Endothelial cell of umbilical vein (primary cell): ENCODE measurements at regions of chr13 and their contacts with region 1.

Region 1: DNA sequence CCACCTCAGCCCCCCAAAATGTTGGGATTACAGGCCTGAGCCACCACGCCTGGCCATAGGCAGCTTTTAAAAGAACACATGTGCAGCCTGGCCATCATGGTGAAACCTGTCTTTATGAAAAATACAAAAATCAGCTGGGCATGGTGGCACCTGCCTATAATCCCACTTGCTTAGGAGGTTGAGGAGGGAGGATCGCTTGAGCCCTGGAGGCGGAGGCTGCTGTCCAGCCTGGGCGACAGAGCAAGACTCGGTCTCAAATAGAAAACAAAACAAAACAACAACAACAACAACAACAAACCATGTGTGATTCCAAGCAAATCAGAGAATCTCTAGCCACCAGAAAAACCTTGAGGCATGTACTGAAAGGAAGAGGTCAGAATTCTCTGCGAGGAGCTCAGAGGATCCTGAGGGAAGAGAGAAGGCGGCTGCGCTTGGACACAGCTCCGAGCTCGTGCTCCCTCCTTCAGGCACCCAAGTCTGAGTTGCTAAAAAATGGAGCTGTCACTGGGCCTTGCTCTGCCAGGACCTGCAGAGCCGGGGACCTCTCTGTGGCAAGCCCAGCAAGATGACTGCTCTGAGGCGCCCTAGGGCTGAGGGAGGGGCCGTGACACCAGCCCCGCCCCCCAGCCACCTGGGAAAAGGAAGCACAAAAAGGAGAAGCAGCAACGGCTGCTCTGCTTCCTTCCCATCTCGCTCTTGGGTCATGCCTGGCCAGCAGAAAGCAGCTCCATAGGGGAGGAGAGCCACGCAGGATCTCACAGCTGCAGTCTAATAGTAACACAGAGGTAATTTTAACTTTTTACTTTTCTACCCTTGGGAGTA is at the start of gene ARL11:
- DNase-seq: no peak
- H3K4me3 ChIP-seq: no peak within 1 kb of the TSS
- H3K27ac ChIP-seq: peak within 1 kb of the TSS; percentile 62
- H3K4me1 ChIP-seq: peaks cover 27% of the 10 kb centered on the region
- H3K27me3 ChIP-seq: peaks cover 0 to 4% of the 10 kb centered on the region in 2 experiments
- CTCF ChIP-seq: no peak
- POLR2A ChIP-seq: no peak
- total RNA-seq, gene ARL11: 0.20 and 0.23 TPM in 2 replicates

Region 2: GRCh38 chr13:49615836-49616675 is 12.0 kb before region 1 on chr13:
- CTCF ChIA-PET with region 1: interaction called, 8 read pairs
- POLR2A ChIA-PET with region 1: no interaction called
- dilution Hi-C with region 1: no loop called
- intact Hi-C with region 1: loop called (anchors 1 kb)
- DNase-seq: peak; percentile 89
- H3K4me3 ChIP-seq: peak overlapping the region in 1 of 3 experiments; percentile 2
- H3K27ac ChIP-seq: peak overlapping the region; percentile 79
- H3K4me1 ChIP-seq: peaks cover 15% of the 10 kb centered on the region
- H3K27me3 ChIP-seq: no peaks in the 10 kb centered on the region
- CTCF ChIP-seq: no peak
- POLR2A ChIP-seq: no peak

Region 3: DNA sequence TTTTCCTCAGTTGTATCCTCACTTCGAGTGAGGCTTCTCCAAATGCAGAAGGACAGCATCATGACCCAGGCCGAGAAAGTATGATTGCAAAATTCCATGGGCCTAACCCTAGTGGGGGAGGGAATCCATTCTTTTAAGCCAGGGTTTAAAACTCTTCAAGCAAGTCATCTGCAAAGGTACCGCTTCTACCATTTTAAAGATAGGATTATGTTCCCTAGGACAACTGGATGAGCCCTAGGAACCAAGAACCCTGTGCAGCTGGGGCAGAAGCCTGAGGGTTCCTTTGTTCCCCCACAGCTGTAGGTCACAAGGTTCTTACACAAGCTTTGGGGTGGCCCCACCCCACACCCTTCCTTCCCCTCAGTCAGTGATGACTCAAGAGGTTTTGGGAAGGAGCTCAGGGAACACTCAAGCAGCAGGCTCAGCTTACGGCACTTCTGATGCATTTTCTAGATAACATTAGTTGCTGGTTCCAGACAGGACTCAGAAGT is 13.8 kb after region 1 on chr13:
- CTCF ChIA-PET with region 1: interaction called, 14 read pairs
- POLR2A ChIA-PET with region 1: no interaction called
- dilution Hi-C with region 1: no loop called
- intact Hi-C with region 1: no loop called
- DNase-seq: no peak
- H3K4me3 ChIP-seq: no peak overlapping the region
- H3K27ac ChIP-seq: no peak overlapping the region
- H3K4me1 ChIP-seq: peaks cover 9% of the 10 kb centered on the region
- H3K27me3 ChIP-seq: no peaks in the 10 kb centered on the region
- CTCF ChIP-seq: no peak
- POLR2A ChIP-seq: no peak